HEK293 (cell line): ENCODE measurements at regions of chr17 and their contacts with region 1.

Region 1: GRCh38 chr17:8209909-8210760 is at the start of gene AURKB:
- H3K4me3 ChIP-seq: peak within 1 kb of the TSS; percentile 76
- H3K27ac ChIP-seq: peak within 1 kb of the TSS; percentile 91
- H3K4me1 ChIP-seq: peaks cover 8% of the 10 kb centered on the region
- CTCF ChIP-seq: no peak

Region 2: DNA sequence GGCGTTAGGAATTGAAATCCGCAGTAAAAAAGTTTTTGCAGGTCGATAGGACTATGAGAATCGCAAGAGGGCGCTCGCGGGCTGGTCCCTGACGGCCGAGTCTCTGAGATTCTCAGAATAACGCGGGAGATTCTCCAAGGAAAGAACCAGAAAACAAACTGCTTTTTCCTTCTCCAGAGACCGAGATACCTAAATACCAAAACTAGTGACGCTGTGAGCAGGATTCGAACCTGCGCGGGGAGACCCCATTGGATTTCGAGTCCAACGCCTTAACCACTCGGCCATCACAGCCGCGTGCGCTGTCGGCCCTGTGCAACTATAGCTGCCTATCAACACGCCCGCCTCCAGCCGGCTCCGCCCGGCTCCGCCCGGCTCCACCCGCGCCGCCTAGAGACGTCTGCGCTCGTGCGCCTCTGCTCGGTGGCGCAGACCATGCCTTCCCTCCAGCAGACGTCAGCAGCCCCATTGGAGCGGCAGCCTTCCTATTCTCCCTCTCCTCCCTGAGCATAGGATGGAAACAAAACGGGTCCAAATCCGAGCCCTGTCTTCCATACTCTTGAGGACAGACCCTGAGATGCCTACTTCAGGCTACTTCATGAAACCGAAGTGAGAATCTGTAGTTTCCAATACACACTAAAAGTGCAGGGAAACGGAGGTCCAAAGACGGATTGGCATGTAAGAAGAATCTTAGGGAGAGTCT is 71.3 kb before region 1 on chr17:
- CTCF ChIA-PET with region 1: interaction called, 10 read pairs
- POLR2A ChIA-PET with region 1: interaction called, 6 read pairs
- H3K4me3 ChIP-seq: peak overlapping the region; percentile 71
- H3K27ac ChIP-seq: peak overlapping the region; percentile 48
- H3K4me1 ChIP-seq: 0 out of 2 replicates have a peak, but pooled peaks cover 4% of the 10 kb centered on the region
- CTCF ChIP-seq: peak; percentile 92

Region 3: DNA sequence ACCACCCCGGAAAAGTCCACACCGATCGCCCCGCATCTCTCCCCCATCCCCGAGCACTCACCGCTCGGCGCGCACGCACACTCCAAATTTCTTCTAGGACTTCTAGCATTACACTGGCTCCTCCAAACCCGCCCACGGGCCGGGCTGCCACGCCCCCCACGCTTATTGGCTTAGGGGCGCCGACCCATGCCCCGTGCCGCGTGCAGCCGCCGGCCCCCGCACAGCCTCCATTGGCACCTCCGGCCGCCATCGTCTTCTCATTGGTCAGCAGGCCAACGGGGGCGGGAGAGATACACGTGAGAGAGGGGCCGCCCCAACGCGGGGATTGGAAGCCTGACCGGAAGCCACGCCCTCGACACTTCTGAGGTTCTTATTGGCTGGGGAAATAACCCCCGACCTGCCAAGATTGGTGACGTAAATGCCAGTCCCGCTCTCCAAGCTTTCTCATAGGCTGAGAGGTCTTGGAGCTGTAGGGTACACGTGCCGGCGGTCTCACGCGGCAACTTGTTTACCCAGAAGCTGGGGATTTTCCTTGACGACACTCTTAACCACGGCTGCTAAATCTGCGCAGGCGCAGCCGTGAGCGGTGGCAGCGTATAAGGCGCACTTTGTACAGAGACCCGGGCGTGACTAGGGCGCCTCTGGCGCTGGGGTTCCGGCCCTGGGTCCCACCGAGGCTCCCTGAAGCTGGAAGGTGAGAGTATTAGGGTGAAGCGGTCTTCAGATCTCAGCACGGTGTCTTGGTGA is 53.7 kb before region 1 on chr17:
- CTCF ChIA-PET with region 1: no interaction called
- POLR2A ChIA-PET with region 1: interaction called, 11 read pairs
- H3K4me3 ChIP-seq: peak overlapping the region; percentile 45
- H3K27ac ChIP-seq: peak overlapping the region; percentile 69
- H3K4me1 ChIP-seq: peaks cover 31% of the 10 kb centered on the region
- CTCF ChIP-seq: peak; percentile 34

Region 4: DNA sequence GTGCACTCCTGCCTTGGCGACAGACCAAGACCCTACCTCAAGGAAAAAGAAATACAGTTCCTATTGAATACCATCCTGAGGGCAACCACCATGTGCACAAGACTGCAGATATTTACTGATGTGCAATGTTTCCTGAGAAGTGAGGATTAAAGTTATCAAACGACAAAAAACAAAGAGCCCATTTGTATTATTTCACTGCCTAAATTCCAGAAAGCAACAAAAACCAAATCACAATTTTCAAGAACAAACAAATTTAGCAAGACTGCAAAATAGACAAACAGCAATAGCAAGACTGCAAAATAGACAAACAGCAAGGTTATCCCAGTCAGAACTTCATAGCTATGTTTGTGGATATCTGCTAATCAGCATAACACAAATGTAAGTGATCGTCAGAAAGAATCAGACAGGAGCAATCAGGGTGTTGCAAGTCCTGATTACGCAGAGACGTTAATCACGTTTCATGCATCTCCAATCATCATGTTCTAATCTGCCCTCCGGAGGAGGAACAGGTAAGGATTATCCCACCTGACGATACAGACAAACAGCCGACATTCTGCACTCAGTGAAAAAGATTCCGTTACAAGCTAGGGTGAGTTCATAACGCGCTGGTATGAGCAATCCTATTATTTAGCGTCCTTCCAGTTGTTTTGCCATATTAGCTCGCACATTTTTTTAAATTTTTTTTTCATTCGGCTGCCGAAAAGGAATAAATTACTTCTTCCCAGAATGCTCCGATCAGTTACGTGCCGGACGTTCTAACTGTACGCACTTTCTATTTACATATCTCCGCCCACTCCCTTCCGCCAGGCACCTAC is 36.9 kb before region 1 on chr17:
- CTCF ChIA-PET with region 1: no interaction called
- POLR2A ChIA-PET with region 1: interaction called, 19 read pairs
- H3K4me3 ChIP-seq: peak overlapping the region; percentile 53
- H3K27ac ChIP-seq: peak overlapping the region; percentile 89
- H3K4me1 ChIP-seq: peaks cover 10% of the 10 kb centered on the region
- CTCF ChIP-seq: no peak

Region 5: GRCh38 chr17:8189711-8190477 is 20.2 kb before region 1 on chr17 and contains the start of gene BORCS6:
- CTCF ChIA-PET with region 1: interaction called, 6 read pairs
- POLR2A ChIA-PET with region 1: interaction called, 394 read pairs
- H3K4me3 ChIP-seq: peak within 1 kb of the TSS; percentile 75
- H3K27ac ChIP-seq: peak within 1 kb of the TSS; percentile 75; the same call in 1 of the 2 replicates
- H3K4me1 ChIP-seq: peaks cover 13% of the 10 kb centered on the region
- CTCF ChIP-seq: peak; percentile 88

Region 6: GRCh38 chr17:8248751-8249607 is 38.8 kb after region 1 on chr17 and contains the start of gene PFAS:
- CTCF ChIA-PET with region 1: interaction called, 4 read pairs
- POLR2A ChIA-PET with region 1: interaction called, 34 read pairs
- H3K4me3 ChIP-seq: peak within 1 kb of the TSS; percentile 77
- H3K27ac ChIP-seq: peak within 1 kb of the TSS; percentile 91
- H3K4me1 ChIP-seq: peaks cover 6% of the 10 kb centered on the region
- CTCF ChIP-seq: no peak

Region 7: DNA sequence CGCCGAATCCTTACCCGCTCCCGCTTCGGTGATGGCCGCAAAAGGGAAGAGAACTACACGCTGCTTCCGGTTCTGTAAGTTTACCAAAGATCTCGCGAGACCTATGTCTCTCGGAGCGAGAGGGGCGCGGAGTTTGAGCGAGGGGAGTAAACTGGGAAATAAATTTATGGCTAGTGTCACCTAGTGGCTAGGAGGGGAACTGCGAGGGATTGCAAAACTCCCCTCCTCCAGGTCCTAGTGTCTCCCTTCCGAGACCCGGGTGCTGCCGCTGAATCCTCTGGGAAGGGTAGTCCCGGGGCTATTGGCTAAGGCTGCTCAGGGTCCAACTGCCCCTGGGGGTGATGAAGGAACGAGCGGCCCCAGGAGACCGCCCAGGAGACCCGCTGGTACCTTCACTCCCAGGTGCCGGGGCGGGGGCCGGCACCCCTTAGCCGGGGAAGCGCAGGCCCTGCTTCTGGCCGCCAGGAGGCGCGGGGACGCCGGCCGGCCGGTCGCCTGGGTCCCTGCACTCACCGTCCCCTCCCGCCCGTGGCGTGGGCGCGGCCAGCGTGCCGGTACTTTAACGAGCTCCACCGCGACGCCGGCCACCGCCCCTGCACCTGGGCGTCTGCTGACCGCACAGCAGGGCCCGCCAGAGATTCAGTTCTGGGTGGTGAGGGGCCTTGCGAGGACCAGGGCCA is 173.1 kb after region 1 on chr17 and contains the start of gene RPL26:
- CTCF ChIA-PET with region 1: no interaction called
- POLR2A ChIA-PET with region 1: interaction called, 10 read pairs
- H3K4me3 ChIP-seq: peak within 1 kb of the TSS; percentile 90
- H3K27ac ChIP-seq: peak within 1 kb of the TSS; percentile 97
- H3K4me1 ChIP-seq: peaks cover 13% of the 10 kb centered on the region
- CTCF ChIP-seq: peak; percentile 98